ENCODE measurements at regions of chr19 and their contacts with region 1.

Region 1: DNA sequence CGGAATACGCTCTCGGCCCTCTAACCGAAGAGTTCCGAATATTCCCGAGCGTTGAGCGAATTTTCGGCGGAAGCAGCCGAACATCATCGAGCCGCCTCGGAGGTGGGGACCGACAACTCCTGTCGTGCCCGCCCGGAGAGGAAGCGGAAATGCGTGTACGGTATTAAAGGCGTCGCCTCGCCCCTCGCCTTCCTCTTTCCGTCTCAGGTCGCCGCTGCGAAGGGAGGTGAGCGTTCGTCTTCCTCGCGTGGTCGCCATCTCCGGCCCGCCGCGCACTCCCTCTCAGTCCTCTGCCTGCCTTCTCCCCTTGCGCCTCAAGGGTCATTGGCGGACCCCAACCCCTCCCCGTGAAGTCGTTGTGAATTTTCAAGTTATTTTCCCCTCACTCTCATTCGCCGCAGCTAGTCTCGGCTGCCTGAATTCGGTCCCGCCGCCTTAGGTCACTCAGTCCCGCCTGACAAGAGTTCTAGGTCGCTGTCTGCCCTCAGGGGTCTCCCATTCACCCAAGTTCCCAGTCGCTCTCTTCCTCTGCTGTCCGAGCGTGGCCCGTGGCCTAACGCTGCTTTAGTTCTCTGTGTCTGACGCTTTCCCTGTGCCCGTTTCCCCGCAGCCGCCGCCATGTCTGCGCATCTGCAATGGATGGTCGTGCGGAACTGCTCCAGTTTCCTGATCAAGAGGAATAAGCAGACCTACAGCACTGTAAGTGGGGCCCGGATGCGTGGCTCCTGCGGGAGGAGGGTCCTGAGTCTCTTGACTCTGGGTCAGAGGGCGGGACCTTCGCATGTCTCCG is at the start of gene RPL28:
- DNase-seq: peak; percentile 95 to 99
- H3K4me3 ChIP-seq: peak within 1 kb of the TSS; percentile 89 to 97 (median 94)
- H3K27ac ChIP-seq: peak within 1 kb of the TSS; percentile 86
- H3K4me1 ChIP-seq: peaks cover 0 to 47% (median 38%) of the 10 kb centered on the region in 4 experiments; a peak in 6 of 7 replicates
- H3K27me3 ChIP-seq: peaks cover 0 to 6% (median 3%) of the 10 kb centered on the region in 4 experiments; a peak in 3 of 7 replicates
- CTCF ChIP-seq: no peak
- EP300 ChIP-seq: no peak
- POLR2A ChIP-seq: peak; percentile 100
- RAD21 ChIP-seq: no peak
- total RNA-seq, gene RPL28: 2,123 and 2,232 TPM in 2 replicates

Region 2: DNA sequence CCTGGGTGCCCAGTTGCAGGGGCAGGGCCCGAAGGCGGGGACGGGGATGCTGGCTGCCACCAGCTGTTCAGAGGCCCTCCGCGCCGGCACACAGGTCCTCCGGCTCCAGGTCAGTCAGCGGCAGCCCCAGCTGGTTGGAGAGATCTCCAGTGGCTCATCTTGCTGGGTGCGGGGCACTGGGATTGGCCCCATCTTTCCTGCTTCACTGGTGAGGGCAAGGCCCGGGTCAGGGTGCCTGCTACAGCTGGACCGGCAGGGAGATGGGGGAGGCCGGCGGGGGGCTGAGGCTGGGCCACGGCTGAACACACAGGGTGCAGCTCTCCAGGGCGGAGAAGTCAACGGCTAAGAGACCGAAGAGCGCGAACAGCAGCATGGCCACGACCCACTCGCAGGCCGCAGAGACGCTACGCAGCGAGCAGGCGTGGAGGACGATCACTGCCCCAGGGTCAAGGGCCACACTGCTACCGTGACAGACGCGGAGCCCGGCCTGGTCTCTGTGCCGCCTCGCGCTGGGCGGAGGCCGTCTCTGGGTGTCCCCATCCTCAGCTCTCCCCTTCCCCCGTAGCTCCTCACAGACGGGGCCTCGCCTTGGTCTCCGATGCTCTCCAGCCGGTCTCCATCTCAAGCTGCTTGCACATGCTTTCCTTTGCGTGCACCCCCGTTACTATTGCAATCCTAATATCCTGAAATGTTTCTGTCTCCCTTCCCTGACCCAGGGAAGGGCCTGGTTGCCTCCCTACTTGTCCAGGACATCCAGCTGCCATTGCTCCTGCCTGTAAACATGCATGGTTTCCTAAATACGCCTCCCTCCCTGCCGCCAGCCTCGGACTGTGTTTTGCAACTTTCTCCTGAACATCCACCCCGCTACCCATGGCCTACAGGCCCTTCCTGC is 73.1 kb before region 1 on chr19:
- CTCF ChIA-PET with region 1: no interaction called
- POLR2A ChIA-PET with region 1: interaction called, 12 read pairs
- DNase-seq: no peak
- H3K4me3 ChIP-seq: no peak overlapping the region
- H3K27ac ChIP-seq: no peak overlapping the region
- H3K4me1 ChIP-seq: no peaks in the 10 kb centered on the region
- H3K27me3 ChIP-seq: no peaks in the 10 kb centered on the region
- CTCF ChIP-seq: no peak
- EP300 ChIP-seq: no peak
- POLR2A ChIP-seq: no peak; a peak in 1 of 3 replicates
- RAD21 ChIP-seq: no peak

Region 3: GRCh38 chr19:55339048-55339888 is 46.7 kb before region 1 on chr19 and contains the start of gene KMT5C:
- CTCF ChIA-PET with region 1: interaction called, 6 read pairs
- POLR2A ChIA-PET with region 1: interaction called, 14 read pairs
- DNase-seq: peak; percentile 100
- H3K4me3 ChIP-seq: peak within 1 kb of the TSS; percentile 69 to 85 (median 84)
- H3K27ac ChIP-seq: peak within 1 kb of the TSS; percentile 99
- H3K4me1 ChIP-seq: peaks cover 0 to 16% (median 9%) of the 10 kb centered on the region in 4 experiments; a peak in 6 of 7 replicates
- H3K27me3 ChIP-seq: peaks cover 0 to 3% (median 0%) of the 10 kb centered on the region in 4 experiments; a peak in 1 of 7 replicates
- CTCF ChIP-seq: peak in 1 of 3 experiments; percentile 7; a peak in 1 of 4 replicates
- EP300 ChIP-seq: no peak
- POLR2A ChIP-seq: no peak; a peak in 1 of 3 replicates
- RAD21 ChIP-seq: no peak; a peak in 1 of 4 replicates
- total RNA-seq, gene KMT5C: 31.5 and 33.4 TPM in 2 replicates

Region 4: GRCh38 chr19:55345818-55346724 is 39.9 kb before region 1 on chr19:
- CTCF ChIA-PET with region 1: interaction called, 12 read pairs
- POLR2A ChIA-PET with region 1: interaction called, 39 read pairs
- DNase-seq: no peak
- H3K4me3 ChIP-seq: no peak overlapping the region
- H3K27ac ChIP-seq: peak overlapping the region; percentile 37; the same call in 1 of the 2 replicates
- H3K4me1 ChIP-seq: peaks cover 11 to 44% (median 32%) of the 10 kb centered on the region in 4 experiments
- H3K27me3 ChIP-seq: no peaks in the 10 kb centered on the region
- CTCF ChIP-seq: no peak
- EP300 ChIP-seq: no peak
- POLR2A ChIP-seq: no peak
- RAD21 ChIP-seq: no peak

Region 5: GRCh38 chr19:55358943-55359633 is 26.8 kb before region 1 on chr19:
- CTCF ChIA-PET with region 1: interaction called, 7 read pairs
- POLR2A ChIA-PET with region 1: interaction called, 30 read pairs
- DNase-seq: no peak
- H3K4me3 ChIP-seq: no peak overlapping the region
- H3K27ac ChIP-seq: no peak overlapping the region
- H3K4me1 ChIP-seq: peaks cover 0 to 10% (median 7%) of the 10 kb centered on the region in 4 experiments; a peak in 6 of 7 replicates
- H3K27me3 ChIP-seq: peaks cover 2 to 31% (median 26%) of the 10 kb centered on the region in 4 experiments
- CTCF ChIP-seq: no peak
- EP300 ChIP-seq: no peak
- POLR2A ChIP-seq: no peak
- RAD21 ChIP-seq: no peak

Region 6: DNA sequence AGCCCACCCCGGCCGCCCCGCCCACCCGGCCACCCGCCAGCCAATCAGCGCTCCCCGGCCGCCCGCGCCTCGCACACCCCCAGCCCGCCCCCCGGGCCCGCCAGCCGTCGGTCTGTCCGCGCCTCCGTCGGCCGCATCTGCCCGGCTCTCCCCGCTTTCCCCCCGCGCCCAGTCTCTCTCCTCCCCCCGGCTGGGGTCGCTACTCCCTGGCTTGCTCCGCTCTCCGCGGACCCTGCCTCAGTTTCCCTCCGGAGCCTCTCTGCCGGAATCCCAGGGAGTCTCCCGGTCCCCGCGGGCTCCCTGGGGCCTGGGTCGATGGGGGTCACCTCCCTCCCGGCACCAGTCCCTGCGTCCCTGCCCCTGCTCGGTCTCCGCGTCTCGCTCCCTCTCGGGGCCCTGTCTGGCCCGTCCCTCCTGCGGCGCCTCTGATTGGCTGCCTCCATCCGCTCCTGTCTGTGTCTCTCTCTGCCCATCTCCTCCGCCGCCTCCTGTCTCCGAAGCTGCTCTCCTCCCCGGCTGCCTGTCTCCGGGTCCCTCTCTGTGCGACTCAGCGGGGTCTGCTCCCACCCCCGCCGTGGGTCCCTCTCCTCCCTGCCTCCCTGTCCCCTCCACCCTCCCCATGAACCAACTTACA is 16.1 kb before region 1 on chr19:
- CTCF ChIA-PET with region 1: interaction called, 5 read pairs
- POLR2A ChIA-PET with region 1: interaction called, 57 read pairs
- DNase-seq: peak in 1 of 2 experiments; percentile 87
- H3K4me3 ChIP-seq: peak overlapping the region; percentile 24 to 71 (median 46)
- H3K27ac ChIP-seq: no peak overlapping the region
- H3K4me1 ChIP-seq: peaks cover 0 to 31% (median 24%) of the 10 kb centered on the region in 4 experiments; a peak in 6 of 7 replicates
- H3K27me3 ChIP-seq: peaks cover 16 to 52% (median 43%) of the 10 kb centered on the region in 4 experiments
- CTCF ChIP-seq: no peak
- EP300 ChIP-seq: no peak
- POLR2A ChIP-seq: no peak
- RAD21 ChIP-seq: no peak

Region 7: GRCh38 chr19:55398200-55398925 is 12.4 kb after region 1 on chr19:
- CTCF ChIA-PET with region 1: interaction called, 39 read pairs
- POLR2A ChIA-PET with region 1: interaction called, 874 read pairs
- DNase-seq: no peak
- H3K4me3 ChIP-seq: no peak overlapping the region
- H3K27ac ChIP-seq: no peak overlapping the region
- H3K4me1 ChIP-seq: peaks cover 0 to under 1% (median under 1%) of the 10 kb centered on the region in 4 experiments; a peak in 4 of 7 replicates
- H3K27me3 ChIP-seq: no peaks in the 10 kb centered on the region
- CTCF ChIP-seq: no peak
- EP300 ChIP-seq: no peak
- POLR2A ChIP-seq: no peak
- RAD21 ChIP-seq: no peak

Region 8: DNA sequence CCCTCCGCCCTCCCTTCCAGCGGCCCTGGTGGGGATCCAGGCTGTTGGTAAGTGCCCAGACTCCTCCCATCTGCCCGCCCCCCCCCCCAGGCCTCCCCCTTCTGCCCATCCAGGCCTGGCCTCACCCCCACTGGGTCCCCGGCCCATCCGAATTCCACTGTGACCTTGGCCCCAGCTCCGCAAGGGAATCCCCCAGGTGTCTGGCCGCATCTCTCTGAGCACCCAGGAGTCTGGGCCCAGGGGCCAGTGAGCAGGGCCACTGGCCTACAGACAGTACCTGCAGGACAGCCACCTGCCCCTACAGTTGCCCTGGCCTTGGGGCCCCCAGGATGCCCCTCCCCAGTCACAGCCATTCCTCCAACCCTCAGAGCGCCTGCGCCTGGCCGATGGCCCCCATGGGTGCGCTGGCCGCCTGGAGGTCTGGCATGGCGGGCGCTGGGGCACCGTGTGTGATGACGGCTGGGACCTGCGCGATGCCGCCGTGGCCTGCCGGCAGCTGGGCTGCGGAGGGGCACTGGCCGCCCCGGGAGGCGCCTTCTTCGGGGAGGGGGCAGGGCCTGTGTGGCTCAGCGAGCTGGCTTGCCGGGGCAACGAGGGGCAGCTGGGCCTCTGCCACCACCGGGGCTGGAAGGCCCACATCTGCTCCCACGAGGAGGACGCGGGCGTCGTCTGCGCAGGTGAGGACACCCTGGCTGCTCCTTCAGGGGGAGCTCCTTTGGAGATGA is 103.2 kb after region 1 on chr19:
- CTCF ChIA-PET with region 1: no interaction called
- POLR2A ChIA-PET with region 1: no interaction called
- DNase-seq: no peak
- H3K4me3 ChIP-seq: peak overlapping the region in 1 of 4 experiments; percentile 57; a peak in 3 of 8 replicates
- H3K27ac ChIP-seq: no peak overlapping the region
- H3K4me1 ChIP-seq: peaks cover 0 to 47% (median 30%) of the 10 kb centered on the region in 4 experiments; a peak in 6 of 7 replicates
- H3K27me3 ChIP-seq: no peaks in the 10 kb centered on the region; a peak in 2 of 7 replicates
- CTCF ChIP-seq: no peak
- EP300 ChIP-seq: no peak
- POLR2A ChIP-seq: no peak
- RAD21 ChIP-seq: no peak